ENCODE measurements at regions of chr15 and their contacts with region 1.

Region 1: GRCh38 chr15:63668601-63669000 is 71.4 kb downstream of the FBXL22 start:
- DNase-seq: no peak
- H3K4me3 Mint-ChIP-seq: peak overlapping the region; percentile 68
- H3K27ac Mint-ChIP-seq: peak overlapping the region; percentile 72
- H3K4me1 Mint-ChIP-seq: peaks cover 58% of the 10 kb centered on the region
- H3K27me3 Mint-ChIP-seq: no peaks in the 10 kb centered on the region

Region 2: DNA sequence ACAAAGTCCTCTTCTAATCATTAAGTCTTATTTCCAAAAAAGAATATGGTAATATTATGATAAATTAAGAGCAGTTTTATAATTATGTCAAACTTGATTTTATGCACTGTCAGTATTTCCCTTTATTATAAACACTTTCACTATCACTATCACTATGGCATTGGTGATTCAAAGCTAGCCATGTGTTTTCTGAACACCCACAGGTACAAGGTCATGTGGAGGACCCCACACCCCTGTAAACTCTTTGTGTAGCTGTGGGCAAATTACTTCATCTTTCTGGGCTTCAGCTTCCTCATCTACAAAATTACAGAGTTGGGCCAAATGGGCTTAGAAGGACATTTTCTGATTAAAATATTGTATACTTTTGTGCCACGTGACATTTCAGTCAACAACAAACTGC is 29.8 kb before region 1 on chr15:
- intact Hi-C with region 1: loop called (anchors 2 kb)
- DNase-seq: no peak
- H3K4me3 Mint-ChIP-seq: no peak overlapping the region
- H3K27ac Mint-ChIP-seq: no peak overlapping the region
- H3K4me1 Mint-ChIP-seq: peaks cover 9% of the 10 kb centered on the region
- H3K27me3 Mint-ChIP-seq: no peaks in the 10 kb centered on the region

Region 3: GRCh38 chr15:63729115-63729884 is 60.7 kb after region 1 on chr15:
- intact Hi-C with region 1: loop called (anchors 2 kb)
- DNase-seq: no peak
- H3K4me3 Mint-ChIP-seq: no peak overlapping the region
- H3K27ac Mint-ChIP-seq: no peak overlapping the region
- H3K4me1 Mint-ChIP-seq: peaks cover 22% of the 10 kb centered on the region
- H3K27me3 Mint-ChIP-seq: no peaks in the 10 kb centered on the region

Measured in activated T-helper 1 cell treated with anti-CD3 and anti-CD28 coated beads, Interleukin-12 subunit alpha, Interleukin-12 subunit beta, Interleukin-2, Interleukin-4 antibody, amounts not matched to agents 30 ng/mL and 10 ng/mL and 1 ng/mL, durations not matched to agents 14 hours and 24 hours and 36 hours (primary cell).